ENCODE measurements at regions of chr1 and their contacts with region 1.

Region 1: DNA sequence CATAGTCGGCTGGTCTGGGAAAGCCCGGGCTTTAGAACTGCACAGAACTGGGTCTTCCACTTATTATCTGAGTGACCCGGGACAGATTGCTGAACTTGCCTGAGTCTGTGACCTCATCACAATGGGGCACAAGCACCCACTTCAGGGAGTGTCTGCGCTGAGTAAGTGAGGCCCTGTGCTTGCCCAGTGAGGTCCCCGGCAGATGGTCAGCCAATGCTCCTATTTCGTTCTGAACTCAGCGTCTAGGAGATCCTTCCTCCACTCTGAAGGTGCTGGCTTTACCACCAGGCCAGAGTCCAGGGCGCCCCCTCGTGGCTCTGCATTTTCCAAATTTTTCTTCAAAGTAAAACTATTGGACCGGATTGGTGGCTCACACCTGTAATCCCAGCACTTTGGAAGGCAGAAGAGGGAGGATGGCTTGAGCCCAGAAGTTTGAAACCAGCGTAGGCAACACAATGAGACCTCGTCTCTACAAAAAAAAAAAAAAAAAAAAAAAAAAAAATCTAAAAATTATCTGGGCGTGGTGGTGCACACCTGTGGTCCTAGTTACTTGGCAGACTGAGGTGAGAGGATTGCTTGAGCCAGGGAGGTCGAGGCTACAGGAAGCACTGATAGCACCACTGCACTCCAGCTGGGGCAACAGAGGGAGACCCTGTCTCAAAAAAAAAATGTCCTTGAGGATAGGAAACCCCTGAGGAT is 61.7 kb downstream of the FCRL5 start:
- DNase-seq: peak in 8 of 10 donors; percentile 14 to 76 (median 56)
- H3K4me3 ChIP-seq: no peak overlapping the region
- H3K27ac ChIP-seq: no peak overlapping the region
- H3K27me3 ChIP-seq: peaks cover 0 to 22% (median 3%) of the 10 kb centered on the region in 45 donors
- CTCF ChIP-seq: peak; percentile 12 to 71 (median 56)

Region 2: GRCh38 chr1:157163273-157164127 is 327.1 kb before region 1 on chr1:
- intact Hi-C with region 1: loop called in 1 of 2 experiments (anchors 10 kb)
- DNase-seq: peak in 8 of 10 donors; percentile 42 to 71 (median 66)
- H3K4me3 ChIP-seq: peak overlapping the region in 25 of 59 donors; percentile 12 to 50 (median 29)
- H3K27ac ChIP-seq: no peak overlapping the region
- H3K27me3 ChIP-seq: peaks cover 0 to 11% (median 0%) of the 10 kb centered on the region in 45 donors
- CTCF ChIP-seq: peak; percentile 64 to 93 (median 82)

Region 3: DNA sequence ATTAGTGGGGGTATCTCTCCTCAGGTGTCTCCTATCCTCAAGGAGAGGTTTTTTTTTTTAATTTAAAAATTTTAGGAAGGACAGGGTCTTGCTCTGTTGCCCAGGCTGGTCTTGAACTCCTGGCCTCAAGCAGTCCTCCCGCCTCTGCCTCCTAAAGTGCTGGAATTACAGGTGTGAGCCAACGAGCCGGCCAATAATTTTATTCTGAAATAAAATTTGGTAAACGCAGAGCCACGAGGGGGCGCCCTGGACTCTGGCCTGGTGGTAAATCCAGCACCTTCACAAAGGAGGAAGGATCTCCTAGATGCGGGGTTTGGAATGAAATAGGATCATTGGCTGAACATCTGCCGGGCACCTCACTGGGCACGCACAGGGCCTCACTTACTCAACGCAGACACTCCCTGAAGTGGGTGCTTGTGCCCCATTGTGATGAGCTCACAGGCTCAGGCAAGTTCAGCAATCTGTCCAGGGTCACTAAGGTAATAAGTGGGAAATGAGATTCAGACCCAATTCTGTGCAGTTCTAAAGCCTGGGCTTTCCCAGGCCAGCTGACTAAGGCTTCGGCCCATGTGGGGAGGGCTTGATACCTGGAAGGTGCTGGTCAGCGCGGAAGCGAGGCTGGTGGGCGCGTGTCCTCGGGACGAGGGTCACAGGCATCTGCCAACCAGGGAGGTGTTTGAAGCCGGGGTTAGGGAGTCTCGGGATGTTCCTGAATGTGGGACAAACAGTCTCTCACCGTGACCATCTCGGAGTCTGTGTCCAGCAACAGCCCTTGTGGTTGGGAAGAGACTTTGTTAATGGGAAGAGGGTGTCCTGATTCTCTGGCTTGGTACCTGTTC is 319.7 kb before region 1 on chr1:
- intact Hi-C with region 1: loop called (anchors 5 to 10 kb)
- DNase-seq: peak in 1 of 10 donors; percentile 29
- H3K4me3 ChIP-seq: no peak overlapping the region
- H3K27ac ChIP-seq: no peak overlapping the region
- H3K27me3 ChIP-seq: peaks cover 0 to 4% (median 0%) of the 10 kb centered on the region in 45 donors
- CTCF ChIP-seq: peak in 48 of 56 donors; percentile 13 to 49 (median 33)

Region 4: DNA sequence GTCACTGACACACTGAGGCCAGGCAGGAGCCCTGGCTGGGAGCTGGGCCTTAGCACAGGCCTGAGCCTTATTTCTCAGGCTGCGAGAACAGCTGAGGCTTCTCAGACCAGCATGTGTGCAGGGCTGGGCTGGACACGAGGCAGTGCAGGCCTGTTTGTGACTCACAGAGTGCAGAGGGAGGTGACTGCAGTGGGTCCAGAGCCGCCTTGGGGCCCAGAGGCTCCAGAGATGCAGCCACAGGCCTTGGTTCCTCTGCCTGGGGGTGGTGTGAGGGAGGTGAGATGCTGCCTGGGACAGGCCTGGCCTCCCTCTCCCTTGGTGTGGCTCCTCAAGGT is 291.2 kb before region 1 on chr1:
- intact Hi-C with region 1: loop called in 1 of 2 experiments (anchors 5 kb)
- DNase-seq: no peak
- H3K4me3 ChIP-seq: no peak overlapping the region
- H3K27ac ChIP-seq: no peak overlapping the region
- H3K27me3 ChIP-seq: peaks cover 0 to 41% (median 22%) of the 10 kb centered on the region in 45 donors
- CTCF ChIP-seq: no peak

Region 5: GRCh38 chr1:157369808-157370521 is 120.7 kb before region 1 on chr1:
- intact Hi-C with region 1: loop called (anchors 2 to 5 kb)
- DNase-seq: peak in 2 of 10 donors; percentile 14 to 42
- H3K4me3 ChIP-seq: no peak overlapping the region
- H3K27ac ChIP-seq: no peak overlapping the region
- H3K27me3 ChIP-seq: peaks cover 0 to 3% (median 0%) of the 10 kb centered on the region in 45 donors
- CTCF ChIP-seq: peak; percentile 78 to 98 (median 92)

Measured in dorsolateral prefrontal cortex (tissue), 120 donors.